Testis (tissue), 5 donors: ENCODE measurements at regions of chr2 and their contacts with region 1.

Region 1: DNA sequence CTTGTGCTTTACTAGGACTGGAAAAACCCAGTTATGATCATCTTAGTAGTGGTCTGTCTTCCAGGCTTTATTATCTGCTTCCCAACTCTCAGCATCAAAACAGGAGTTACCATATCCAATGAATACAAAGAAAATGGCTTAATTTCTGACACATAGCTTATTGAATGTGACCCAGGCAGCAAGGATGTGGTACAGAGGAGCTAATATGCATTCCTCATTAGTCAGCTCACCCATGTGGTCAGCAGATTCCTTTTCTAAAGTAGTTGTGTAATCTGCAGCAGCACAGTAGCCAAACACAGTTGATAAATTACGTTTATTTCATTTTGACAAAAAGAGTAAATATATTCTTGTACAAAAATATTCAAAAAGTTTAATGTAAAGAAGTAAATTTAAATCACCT is 43.6 kb downstream of the TSPYL6 start:
- DNase-seq: no peak
- H3K4me3 ChIP-seq: no peak overlapping the region
- H3K27ac ChIP-seq: no peak overlapping the region
- H3K4me1 ChIP-seq: peaks cover 12% of the 10 kb centered on the region
- H3K27me3 ChIP-seq: no peaks in the 10 kb centered on the region
- CTCF ChIP-seq: no peak
- POLR2A ChIP-seq: no peak

Region 2: GRCh38 chr2:54081574-54081973 is 130.9 kb before region 1 on chr2:
- intact Hi-C with region 1: no loop called
- DNase-seq: no peak
- H3K4me3 ChIP-seq: no peak overlapping the region
- H3K27ac ChIP-seq: no peak overlapping the region
- H3K4me1 ChIP-seq: no peaks in the 10 kb centered on the region
- H3K27me3 ChIP-seq: no peaks in the 10 kb centered on the region
- CTCF ChIP-seq: no peak
- POLR2A ChIP-seq: no peak

Region 3: DNA sequence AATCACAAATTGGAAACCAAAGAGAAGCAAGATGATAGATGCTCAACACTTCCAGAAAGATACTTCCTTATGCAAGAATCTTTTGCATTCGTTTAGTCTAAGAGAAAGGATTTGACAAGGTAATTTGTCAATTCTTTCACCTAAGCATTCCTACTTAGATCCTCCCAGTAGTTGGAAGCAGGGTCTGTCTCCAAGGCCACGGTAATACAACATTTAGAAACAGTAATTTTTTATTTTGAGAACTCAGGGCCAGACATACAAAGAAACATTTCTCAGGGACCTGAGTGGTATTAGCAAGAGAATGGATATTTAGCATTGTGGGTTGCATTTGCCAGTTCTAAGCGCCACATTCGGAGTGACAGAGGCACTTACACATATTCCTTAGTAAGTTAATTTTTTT is 28.5 kb before region 1 on chr2:
- intact Hi-C with region 1: no loop called
- DNase-seq: no peak
- H3K4me3 ChIP-seq: no peak overlapping the region
- H3K27ac ChIP-seq: no peak overlapping the region
- H3K4me1 ChIP-seq: no peaks in the 10 kb centered on the region
- H3K27me3 ChIP-seq: no peaks in the 10 kb centered on the region
- CTCF ChIP-seq: no peak
- POLR2A ChIP-seq: no peak

Region 4: DNA sequence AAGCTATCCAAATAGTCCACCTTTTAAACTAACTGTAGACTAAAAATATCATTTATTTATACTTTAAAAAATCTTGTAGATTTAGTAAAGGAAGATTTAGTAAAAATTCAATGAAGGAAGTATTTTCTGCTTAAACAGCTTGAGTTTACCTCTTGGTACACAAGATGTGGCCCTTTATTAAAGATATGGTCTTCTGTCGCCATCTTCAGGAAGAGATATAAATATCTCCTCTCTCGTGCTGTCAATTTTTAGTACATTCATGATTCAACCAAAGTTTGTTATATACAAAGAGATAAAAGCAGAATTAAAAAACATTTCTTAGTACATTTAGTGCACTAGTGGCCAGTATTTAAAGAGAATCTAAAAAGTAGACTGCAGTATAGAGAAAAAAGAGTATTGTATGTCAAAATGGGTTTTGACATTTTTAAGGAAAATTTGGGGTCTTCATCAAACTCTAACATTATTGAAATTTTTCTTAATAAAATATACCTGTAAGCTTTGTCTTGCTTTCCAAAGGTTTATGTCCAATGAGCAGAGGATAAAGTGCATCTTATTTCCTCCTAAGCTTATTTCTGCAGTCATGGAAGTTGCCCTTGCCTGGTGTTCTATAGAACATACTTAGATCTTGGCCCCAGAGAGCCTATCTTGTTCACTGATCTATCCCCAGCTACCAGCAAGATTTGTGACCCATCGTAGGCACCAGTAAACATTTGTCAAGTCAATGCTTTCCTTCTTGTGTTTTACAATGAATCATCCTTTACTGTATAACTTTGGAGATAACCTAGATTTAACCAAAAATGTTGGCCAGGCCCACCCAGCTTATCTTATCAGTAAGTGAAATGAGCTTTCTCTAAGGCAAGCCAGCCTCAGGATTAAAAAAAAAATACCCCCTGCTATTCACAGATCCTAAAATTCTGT is 492.5 kb after region 1 on chr2:
- intact Hi-C with region 1: loop called (anchors 5 kb)
- DNase-seq: no peak
- H3K4me3 ChIP-seq: no peak overlapping the region
- H3K27ac ChIP-seq: no peak overlapping the region
- H3K4me1 ChIP-seq: no peaks in the 10 kb centered on the region
- H3K27me3 ChIP-seq: no peaks in the 10 kb centered on the region
- CTCF ChIP-seq: peak; percentile 39 to 45 (median 45)
- POLR2A ChIP-seq: no peak